Aorta (tissue), 5 donors: ENCODE measurements at regions of chr9 and their contacts with region 1.

Region 1: GRCh38 chr9:88605512-88606362 is 70.8 kb downstream of the NXNL2 start:
- DNase-seq: no peak
- ATAC-seq: peak; percentile 89
- H3K4me3 ChIP-seq: no peak overlapping the region
- H3K27ac ChIP-seq: peak overlapping the region; percentile 6 to 90
- H3K4me1 ChIP-seq: peaks cover 8% of the 10 kb centered on the region in 2 donors
- H3K27me3 ChIP-seq: no peaks in the 10 kb centered on the region

Region 2: DNA sequence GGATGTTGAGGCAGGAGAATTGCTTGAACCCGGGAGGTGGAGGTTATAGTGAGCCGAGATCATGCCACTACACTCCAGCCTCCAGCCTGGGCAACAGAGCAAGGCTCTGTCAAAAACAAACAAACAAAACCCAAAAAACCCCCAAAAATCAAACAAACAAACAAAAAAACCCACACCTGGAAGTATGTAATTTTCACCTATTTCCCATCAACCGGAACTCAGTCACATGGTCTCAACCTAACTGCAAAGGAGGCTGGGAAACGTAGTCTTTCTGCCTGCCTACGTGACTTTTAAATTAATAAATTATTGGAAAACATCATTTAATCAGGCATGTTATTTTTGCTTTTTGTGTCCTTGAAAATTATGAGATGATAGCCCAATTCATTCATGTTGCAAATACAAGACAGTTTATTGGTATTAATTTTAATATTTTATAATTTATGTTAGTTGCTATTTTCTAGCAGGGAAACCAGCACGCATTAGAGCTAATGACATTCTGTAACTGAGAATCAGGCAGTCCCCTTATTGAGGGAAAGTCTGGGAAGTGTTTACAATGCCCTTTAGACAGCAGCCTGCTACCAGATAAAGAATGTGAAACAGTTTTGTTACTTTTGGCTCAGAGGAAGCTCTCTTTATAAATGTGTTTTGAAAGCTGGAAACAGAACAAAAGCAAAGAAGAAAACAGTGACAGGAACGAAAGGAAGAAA is 39.6 kb after region 1 on chr9:
- intact Hi-C with region 1: loop called in 1 of 2 experiments (anchors 5 kb)
- DNase-seq: no peak
- ATAC-seq: no peak
- H3K4me3 ChIP-seq: no peak overlapping the region
- H3K27ac ChIP-seq: no peak overlapping the region
- H3K4me1 ChIP-seq: no peaks in the 10 kb centered on the region
- H3K27me3 ChIP-seq: no peaks in the 10 kb centered on the region

Region 3: GRCh38 chr9:88733651-88734421 is 128.1 kb after region 1 on chr9:
- intact Hi-C with region 1: loop called (anchors 5 to 10 kb)
- DNase-seq: peak; percentile 59 to 86
- ATAC-seq: peak; percentile 50
- H3K4me3 ChIP-seq: no peak overlapping the region
- H3K27ac ChIP-seq: no peak overlapping the region
- H3K4me1 ChIP-seq: peaks cover 0 to 6% of the 10 kb centered on the region in 2 donors
- H3K27me3 ChIP-seq: no peaks in the 10 kb centered on the region

Region 4: DNA sequence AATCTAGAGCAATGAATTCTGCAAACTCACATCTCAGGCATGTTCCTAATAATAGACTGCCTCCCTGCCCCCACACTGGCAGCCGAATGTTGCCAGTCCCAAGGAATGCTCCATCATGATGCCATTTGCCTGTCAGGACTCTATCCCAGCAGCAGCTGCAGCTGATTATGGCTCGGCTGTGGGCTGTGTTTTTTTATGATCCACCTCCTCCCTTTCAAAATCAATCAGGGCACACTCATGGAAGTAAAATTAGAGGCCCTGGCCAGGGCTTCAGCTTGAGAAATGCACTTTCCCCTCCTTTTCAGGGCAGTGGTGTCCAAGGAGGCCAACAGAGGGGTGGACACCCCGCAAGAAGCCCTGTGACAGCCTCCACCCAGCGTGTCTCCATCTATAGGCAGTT is 208.8 kb after region 1 on chr9:
- intact Hi-C with region 1: loop called in 1 of 2 experiments (anchors 2 kb)
- DNase-seq: peak; percentile 86 to 90
- ATAC-seq: peak; percentile 78
- H3K4me3 ChIP-seq: no peak overlapping the region
- H3K27ac ChIP-seq: peak overlapping the region in 1 of 2 donors; percentile 35
- H3K4me1 ChIP-seq: no peaks in the 10 kb centered on the region
- H3K27me3 ChIP-seq: no peaks in the 10 kb centered on the region

Region 5: GRCh38 chr9:89000973-89001916 is 395.5 kb after region 1 on chr9:
- intact Hi-C with region 1: loop called in 1 of 2 experiments (anchors 2 kb)
- DNase-seq: peak; percentile 93 to 95
- ATAC-seq: peak; percentile 80
- H3K4me3 ChIP-seq: no peak overlapping the region
- H3K27ac ChIP-seq: peak overlapping the region in 1 of 2 donors; percentile 64
- H3K4me1 ChIP-seq: peaks cover 0 to 3% of the 10 kb centered on the region in 2 donors
- H3K27me3 ChIP-seq: no peaks in the 10 kb centered on the region